ENCODE measurements at regions of chr2 and their contacts with region 1.

Region 1: DNA sequence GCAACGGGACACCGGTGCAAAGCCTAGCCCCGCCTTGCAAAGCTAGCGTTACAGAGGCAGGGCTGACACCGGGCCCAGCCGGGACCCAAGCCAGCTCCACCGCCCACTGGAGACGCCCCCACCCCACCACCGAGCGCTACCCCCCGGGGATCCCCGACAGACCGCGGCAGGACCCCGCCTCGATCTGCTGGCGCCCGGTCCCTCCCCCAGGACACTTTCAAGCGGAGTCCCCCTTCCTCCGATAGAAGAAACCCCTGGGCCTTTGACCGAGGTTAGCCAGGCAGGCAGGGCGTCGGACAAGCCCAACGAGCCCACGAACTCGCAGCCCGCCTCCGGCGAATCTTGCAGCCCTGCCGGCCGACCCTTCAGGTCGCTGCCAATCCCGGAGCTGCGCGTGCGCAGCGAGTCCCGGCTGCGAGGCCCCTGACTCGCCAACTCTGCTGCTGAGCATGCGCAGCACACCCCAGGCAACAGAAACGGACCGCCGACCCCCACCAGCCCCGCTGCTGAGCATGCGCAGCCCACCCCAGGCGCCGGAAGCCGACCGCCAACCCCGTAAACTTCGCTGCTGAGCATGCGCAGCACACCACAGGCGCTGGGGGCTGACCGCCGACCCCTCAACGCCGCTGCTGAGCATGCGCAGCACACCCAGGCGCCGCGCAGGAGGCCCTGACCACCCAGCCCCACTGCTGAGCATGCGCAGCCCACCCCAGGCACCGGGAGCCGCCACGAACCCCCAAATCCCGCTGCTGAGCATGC is 656 bp downstream of the ADI1 start:
- DNase-seq: peak; percentile 98
- ATAC-seq: peak; percentile 97

Region 2: DNA sequence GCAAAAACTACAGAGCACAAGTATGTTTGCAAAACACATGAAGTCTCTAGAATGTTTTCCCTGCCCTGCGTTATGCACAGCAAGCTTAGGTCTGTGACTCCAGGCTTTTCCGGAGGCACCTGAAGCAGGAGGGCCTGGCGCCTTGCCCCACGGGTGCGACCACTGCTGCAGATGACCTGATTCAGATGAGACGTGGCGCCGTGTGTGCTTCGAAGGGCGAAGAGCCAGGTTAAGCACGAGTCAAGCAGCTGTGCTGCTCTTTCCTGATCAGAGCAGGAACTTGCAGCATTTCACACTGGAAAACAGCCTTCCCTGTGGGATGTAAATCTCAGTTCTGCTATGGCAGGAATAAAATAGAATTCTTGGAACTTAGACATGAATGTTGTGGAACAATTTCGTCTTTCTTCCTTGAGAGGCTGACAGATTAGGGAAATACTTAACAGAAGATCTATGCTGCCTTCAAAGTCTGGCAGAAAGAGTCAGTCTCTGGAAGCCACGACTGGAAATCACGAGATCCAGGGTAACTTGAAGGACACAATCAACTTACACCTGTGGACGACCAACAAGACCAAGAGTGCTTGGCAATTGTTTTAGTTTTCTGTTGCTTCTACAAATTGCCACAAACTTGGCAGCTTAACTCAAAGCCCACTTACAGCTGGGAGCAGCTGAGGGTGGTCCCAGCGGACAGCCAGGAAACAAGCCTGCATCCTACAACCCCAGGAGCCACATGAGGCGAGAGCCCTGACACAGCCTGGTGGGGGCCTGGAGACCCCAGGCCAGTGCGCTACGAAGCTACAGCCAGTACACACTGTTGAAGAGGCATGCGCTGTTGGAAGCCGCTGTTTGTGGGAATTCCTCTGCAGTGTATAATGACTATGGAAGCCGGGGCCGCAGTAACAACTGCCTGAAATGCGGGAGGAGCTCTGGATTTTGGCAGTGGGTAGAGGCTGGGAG is 184.0 kb before region 1 on chr2:
- intact Hi-C with region 1: no loop called
- DNase-seq: peak; percentile 74
- ATAC-seq: peak; percentile 48

Region 3: DNA sequence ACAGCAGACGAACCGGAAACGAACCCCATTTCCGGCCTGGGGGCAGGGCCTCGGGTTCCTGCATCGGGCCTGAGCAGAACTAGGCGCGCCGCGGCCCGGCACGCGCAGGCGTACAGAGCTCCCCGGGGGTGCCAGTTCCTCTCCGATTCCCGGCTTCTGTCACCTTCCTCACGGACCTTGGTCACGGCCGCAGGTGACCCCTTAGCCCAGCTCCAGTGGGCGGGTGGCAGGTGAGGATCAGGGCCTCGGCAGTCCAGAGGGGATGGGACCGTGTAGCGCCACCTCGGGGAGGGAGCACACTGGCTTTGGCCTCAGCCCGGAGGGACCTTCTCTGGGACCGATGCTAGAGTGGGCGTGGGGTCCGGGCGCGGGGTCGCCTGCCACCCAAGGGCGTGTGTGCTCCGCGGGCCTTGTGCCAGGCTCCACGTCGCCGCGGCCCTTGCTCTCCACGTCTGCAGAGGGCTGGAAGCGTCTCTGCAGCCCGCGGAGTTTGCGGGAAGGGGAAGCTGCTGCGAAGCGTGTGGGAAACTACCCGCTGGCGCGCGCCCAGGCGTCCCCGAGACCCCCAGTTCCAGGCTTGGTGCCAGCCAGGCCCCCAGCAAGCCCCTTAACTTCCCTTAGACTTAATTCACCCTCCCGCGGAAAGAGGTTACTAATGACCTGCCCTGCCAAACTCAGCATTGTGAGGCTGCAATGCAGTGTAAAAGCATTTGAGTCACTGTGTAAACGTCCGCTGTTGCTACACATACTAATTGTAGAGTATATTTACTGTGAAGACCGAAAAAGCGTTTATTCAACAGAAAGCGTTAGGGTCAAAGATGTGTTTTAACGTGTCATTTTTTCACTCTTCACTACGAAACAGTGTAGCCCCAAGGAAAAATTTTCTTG is 138.8 kb before region 1 on chr2 and contains the start of gene TRAPPC12:
- intact Hi-C with region 1: loop called (anchors 10 kb)
- DNase-seq: peak; percentile 96
- ATAC-seq: peak; percentile 93
- total RNA-seq, gene TRAPPC12: 110 TPM

Region 4: DNA sequence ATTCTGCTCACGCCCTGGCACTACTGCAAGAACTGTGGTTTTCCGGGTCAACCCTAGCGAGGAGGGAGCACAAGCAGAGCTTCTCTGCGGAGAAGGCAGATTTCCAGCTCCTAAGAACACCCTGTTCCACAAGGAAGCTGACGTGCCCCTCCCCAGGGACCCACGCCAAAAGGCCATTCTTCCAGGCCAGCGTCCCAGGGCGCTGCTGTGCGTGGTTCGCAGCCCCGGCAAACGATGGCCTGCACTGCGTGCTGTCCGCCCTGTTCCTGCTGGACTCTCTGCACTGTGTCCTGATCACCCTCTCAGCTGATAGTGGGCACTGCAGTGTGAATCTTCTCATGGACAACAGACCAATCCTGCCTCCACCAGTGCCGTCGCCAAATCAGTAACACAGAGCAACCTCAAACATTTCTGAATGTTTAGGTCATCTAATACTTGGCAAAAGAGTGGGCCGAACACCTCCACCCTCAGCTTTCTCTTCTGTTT is 48.5 kb before region 1 on chr2:
- intact Hi-C with region 1: loop called (anchors 2 kb)
- DNase-seq: peak; percentile 87
- ATAC-seq: peak; percentile 86

Region 5: DNA sequence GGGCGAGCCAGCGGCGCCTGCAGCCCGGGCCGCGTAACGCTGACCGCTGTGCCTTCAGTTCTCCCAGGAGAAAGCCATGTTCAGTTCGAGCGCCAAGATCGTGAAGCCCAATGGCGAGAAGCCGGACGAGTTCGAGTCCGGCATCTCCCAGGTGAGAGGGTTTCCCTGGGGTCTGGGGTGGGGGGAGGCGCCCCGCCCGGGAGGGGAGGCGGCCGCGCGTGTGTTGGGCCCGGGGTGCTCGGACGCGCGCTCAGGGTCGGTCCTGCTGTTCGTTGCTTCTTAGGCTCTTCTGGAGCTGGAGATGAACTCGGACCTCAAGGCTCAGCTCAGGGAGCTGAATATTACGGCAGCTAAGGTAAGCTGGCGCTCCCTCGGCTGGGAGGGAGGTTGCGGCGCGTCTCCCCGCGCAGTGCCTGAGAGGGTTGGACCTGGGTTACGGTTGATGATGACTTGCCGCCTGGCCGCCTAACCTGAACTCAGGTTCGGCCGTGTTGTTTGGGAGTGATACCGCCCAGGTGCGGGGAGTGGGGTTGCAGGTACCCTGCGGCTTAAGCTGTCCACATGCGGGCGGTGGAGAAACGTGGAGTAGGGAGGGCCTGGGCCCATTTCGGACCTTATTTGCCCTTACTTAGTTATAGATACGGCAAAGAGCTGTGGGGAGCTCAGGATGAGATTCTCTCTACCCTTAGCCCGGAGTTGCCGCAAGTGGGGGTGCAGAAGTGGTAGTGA is 57.0 kb after region 1 on chr2:
- intact Hi-C with region 1: loop called (anchors 1 kb)
- DNase-seq: no peak
- ATAC-seq: peak; percentile 18